ENCODE measurements at regions of chr1 and their contacts with region 1.

Region 1: DNA sequence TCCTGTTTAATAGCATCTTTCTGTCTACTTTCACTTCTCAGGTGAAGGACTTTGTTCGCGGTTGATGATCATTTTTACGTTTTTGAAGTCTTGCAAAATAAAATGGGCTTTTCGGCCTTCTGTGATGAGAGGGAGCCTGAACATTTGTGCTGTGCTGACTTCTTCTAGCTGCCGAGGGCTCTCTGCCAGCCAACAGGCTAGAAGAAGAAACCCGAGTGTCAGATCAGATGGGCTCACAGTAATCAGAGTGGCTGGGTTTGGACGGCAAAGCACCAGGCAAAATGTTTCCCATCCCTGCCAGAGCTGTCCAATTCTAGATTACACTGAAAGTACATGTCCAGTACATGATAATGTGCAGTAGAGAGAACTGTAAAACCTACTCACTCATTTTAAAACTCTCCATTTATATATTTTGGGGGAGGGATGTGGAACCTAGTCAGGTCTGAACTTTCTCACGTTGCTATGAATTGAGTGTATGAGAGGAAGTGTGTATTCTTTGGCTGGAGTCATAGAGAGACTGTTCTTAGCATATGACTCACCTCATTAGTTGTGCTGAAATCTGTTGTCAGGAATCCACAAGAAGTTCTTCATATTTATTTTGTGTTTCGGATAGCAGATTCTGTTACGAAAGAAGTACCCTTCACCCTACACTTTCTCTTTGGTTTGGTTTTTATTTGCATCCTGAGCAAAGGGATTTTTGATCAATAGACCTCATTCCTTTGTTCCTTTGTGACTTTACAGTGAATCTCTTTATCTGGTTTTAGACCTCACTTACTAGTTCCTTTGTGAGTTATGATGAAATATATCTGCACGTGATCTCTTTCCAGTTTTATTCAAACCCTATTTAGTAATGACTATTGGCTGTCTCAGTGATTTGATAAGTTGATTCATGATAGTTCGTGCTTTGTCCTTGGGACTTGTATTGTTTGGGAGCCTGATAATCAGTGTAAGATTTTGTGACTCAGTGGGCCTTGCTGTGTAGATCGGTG is 4.8 kb downstream of the ATP1A1 start:
- DNase-seq: peak; percentile 93
- H3K4me3 Mint-ChIP-seq: peak overlapping the region; percentile 94
- H3K27ac Mint-ChIP-seq: peak overlapping the region; percentile 78
- H3K4me1 Mint-ChIP-seq: peaks cover 55% of the 10 kb centered on the region
- H3K27me3 Mint-ChIP-seq: no peaks in the 10 kb centered on the region
- CTCF ChIP-seq: no peak

Region 2: GRCh38 chr1:116092752-116093482 is 284.9 kb before region 1 on chr1:
- CTCF ChIA-PET with region 1: no interaction called
- POLR2A ChIA-PET with region 1: no interaction called
- intact Hi-C with region 1: no loop called
- DNase-seq: no peak
- H3K4me3 Mint-ChIP-seq: no peak overlapping the region
- H3K27ac Mint-ChIP-seq: peak overlapping the region; percentile 31
- H3K4me1 Mint-ChIP-seq: peaks cover 5% of the 10 kb centered on the region
- H3K27me3 Mint-ChIP-seq: no peaks in the 10 kb centered on the region
- CTCF ChIP-seq: no peak

Region 3: DNA sequence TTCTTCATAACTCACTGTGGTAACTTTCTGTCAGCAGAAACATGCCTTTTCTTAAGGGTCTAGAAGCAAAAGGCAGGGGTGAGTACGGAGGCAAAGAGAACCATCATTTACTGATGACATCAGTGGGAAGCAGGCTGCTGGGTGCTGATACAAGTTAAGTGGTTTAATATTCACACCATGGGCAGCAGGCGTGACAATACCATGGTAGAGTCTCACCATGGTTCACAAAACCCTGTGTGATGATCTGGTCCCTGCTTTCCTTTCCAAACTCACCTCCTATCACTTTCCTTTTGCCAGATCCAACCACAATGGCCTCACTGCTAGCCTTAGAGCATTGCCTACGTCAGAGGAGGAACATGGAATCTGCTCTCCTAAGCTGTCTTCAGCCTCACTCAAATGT is 258.0 kb before region 1 on chr1:
- CTCF ChIA-PET with region 1: no interaction called
- POLR2A ChIA-PET with region 1: no interaction called
- intact Hi-C with region 1: no loop called
- DNase-seq: no peak
- H3K4me3 Mint-ChIP-seq: no peak overlapping the region
- H3K27ac Mint-ChIP-seq: no peak overlapping the region
- H3K4me1 Mint-ChIP-seq: peaks cover 14% of the 10 kb centered on the region
- H3K27me3 Mint-ChIP-seq: no peaks in the 10 kb centered on the region
- CTCF ChIP-seq: no peak

Region 4: GRCh38 chr1:116151739-116152576 is 225.9 kb before region 1 on chr1:
- CTCF ChIA-PET with region 1: interaction called, 14 read pairs
- POLR2A ChIA-PET with region 1: interaction called, 24 read pairs
- intact Hi-C with region 1: loop called (anchors 10 kb)
- DNase-seq: peak; percentile 72
- H3K4me3 Mint-ChIP-seq: peak overlapping the region; percentile 20
- H3K27ac Mint-ChIP-seq: no peak overlapping the region
- H3K4me1 Mint-ChIP-seq: peaks cover 4% of the 10 kb centered on the region
- H3K27me3 Mint-ChIP-seq: peaks cover 12% of the 10 kb centered on the region
- CTCF ChIP-seq: peak; percentile 90

Region 5: GRCh38 chr1:116288201-116288761 is 89.6 kb before region 1 on chr1:
- CTCF ChIA-PET with region 1: interaction called, 7 read pairs
- POLR2A ChIA-PET with region 1: interaction called, 62 read pairs
- intact Hi-C with region 1: loop called (anchors 1 kb)
- DNase-seq: no peak
- H3K4me3 Mint-ChIP-seq: no peak overlapping the region
- H3K27ac Mint-ChIP-seq: peak overlapping the region; percentile 55
- H3K4me1 Mint-ChIP-seq: peaks cover 59% of the 10 kb centered on the region
- H3K27me3 Mint-ChIP-seq: no peaks in the 10 kb centered on the region
- CTCF ChIP-seq: no peak

Region 6: DNA sequence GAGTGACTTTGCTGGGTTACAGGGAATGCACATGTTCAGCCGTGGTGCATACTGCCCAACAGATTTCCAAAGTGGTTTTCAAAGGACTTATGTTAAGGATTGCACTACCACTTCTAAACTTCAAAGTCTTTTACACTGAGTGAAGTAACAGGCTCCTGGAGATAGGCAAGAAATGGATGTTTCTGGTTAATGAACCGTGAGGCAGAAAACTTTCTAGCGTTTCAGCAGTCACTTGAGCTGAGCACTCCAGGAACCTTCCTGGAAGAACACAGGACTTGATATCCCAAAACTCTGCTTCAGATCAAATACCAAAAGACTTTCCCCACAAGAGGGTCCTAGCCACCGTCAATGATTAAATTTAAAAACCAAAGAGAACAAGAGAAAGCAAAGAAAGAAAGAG is 79.1 kb before region 1 on chr1:
- CTCF ChIA-PET with region 1: no interaction called
- POLR2A ChIA-PET with region 1: no interaction called
- intact Hi-C with region 1: no loop called
- DNase-seq: no peak
- H3K4me3 Mint-ChIP-seq: no peak overlapping the region
- H3K27ac Mint-ChIP-seq: no peak overlapping the region
- H3K4me1 Mint-ChIP-seq: peaks cover 12% of the 10 kb centered on the region
- H3K27me3 Mint-ChIP-seq: no peaks in the 10 kb centered on the region
- CTCF ChIP-seq: no peak

Region 7: GRCh38 chr1:116334015-116334547 is 43.8 kb before region 1 on chr1:
- CTCF ChIA-PET with region 1: interaction called, 3 read pairs
- POLR2A ChIA-PET with region 1: interaction called, 28 read pairs
- intact Hi-C with region 1: no loop called
- DNase-seq: peak; percentile 94
- H3K4me3 Mint-ChIP-seq: no peak overlapping the region
- H3K27ac Mint-ChIP-seq: no peak overlapping the region
- H3K4me1 Mint-ChIP-seq: peaks cover 24% of the 10 kb centered on the region
- H3K27me3 Mint-ChIP-seq: no peaks in the 10 kb centered on the region
- CTCF ChIP-seq: no peak

Region 8: DNA sequence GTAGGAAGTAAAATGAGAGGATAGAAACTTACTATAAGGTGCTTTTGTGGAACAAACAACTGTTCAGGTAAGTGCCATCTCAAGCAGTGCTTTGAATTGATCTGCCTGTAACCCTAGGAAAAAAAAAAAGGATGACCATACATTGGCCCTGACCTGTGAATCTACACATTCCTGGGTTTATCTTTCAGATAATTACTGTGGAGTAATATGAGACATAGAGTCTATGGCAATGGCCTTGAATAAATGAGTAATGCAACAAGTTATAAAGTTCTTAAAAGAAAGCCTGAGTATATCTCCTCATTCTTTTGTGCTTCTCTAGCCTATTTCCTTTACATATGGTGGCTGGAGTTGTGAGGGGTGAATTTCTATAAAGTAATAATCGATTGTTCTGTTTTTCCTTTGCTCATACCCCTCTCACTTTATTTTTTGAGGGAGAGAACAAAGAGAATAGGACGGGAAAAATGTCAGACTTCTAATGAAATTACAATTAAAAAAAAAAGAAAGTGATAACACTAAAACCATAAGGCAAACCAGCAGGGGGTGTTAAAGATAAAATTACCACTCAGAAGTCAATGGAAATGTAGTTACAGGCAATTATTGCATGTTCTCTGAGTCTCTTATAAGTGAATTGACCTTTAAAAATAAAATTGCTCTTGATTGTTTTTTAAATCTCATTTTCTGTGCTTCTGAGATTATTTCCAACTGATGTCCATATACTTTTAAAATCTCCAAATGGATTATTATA is 17.2 kb before region 1 on chr1:
- CTCF ChIA-PET with region 1: no interaction called
- POLR2A ChIA-PET with region 1: interaction called, 31 read pairs
- intact Hi-C with region 1: no loop called
- DNase-seq: peak; percentile 48
- H3K4me3 Mint-ChIP-seq: no peak overlapping the region
- H3K27ac Mint-ChIP-seq: no peak overlapping the region
- H3K4me1 Mint-ChIP-seq: peaks cover 24% of the 10 kb centered on the region
- H3K27me3 Mint-ChIP-seq: no peaks in the 10 kb centered on the region
- CTCF ChIP-seq: peak; percentile 21

Region 9: DNA sequence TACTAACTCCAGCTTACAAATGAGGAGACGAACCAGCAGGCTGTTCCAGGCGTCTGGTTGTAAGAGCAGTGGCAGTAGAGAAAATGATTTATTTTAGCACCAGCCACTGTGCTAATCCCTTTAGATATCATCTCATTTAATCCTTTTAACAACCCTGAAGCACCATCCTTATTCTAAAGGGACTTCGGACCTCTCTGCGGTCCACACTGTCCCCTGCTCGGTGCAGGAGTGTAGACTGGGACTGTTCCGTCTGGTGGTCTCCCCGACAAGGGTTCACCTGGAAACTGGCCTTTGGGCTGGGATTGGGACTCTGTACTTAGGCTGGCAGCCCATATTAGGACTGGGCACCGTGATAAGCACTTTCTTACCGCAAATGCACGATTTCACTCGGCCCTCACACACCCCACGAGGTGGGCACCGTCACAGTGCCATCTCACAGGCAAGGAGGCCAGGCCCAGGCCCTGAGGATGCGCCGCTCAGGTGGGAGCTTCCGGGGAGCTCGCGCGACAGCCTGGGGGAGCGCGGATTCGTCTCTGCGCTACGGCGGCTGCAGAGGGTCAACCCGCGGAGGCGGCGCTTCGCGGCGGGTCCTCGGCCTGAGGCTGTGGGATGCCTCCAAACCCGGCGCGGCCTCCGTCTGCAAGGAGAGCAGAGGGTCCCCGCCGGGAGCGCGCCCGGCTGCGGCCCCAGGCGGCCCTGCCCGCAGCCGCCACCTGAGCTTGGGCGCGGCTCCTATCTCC is 40.4 kb after region 1 on chr1:
- CTCF ChIA-PET with region 1: interaction called, 4 read pairs
- POLR2A ChIA-PET with region 1: interaction called, 18 read pairs
- intact Hi-C with region 1: no loop called
- DNase-seq: peak; percentile 70
- H3K4me3 Mint-ChIP-seq: peak overlapping the region; percentile 85
- H3K27ac Mint-ChIP-seq: peak overlapping the region; percentile 50
- H3K4me1 Mint-ChIP-seq: peaks cover 6% of the 10 kb centered on the region
- H3K27me3 Mint-ChIP-seq: no peaks in the 10 kb centered on the region
- CTCF ChIP-seq: no peak

Region 10: DNA sequence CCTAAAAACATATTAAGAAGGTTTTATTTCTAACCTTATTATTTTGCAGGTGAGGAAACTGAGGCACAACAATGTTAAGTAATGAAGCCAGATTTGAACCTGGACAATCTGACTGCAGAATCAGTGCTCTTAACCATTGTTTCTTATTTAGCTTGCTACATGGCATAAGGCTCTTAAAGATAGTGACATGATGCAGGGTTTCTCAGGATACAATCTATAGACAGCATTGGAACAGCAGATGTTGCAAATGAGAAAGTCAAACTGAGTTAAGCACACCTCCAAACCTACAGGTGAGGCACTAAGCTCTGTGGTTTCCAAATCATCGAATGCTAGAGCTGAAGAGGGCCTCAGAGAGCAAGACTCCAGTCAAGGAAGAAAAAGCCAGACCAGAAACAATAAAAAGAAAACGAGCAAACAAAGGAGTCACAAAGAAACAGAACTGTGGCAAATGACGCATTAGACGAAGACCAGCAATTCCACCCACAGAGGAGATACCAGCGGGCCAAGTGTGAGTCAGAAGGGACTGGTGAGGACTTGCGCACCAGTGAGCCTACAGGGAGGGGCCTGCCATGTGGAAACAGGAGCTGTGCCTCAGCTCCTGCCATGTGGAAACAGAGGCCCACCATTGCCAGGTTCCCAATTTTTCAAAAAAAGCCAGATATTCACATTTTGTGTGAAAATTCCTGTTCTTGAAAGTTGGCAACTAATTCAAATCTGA is 178.6 kb after region 1 on chr1:
- CTCF ChIA-PET with region 1: no interaction called
- POLR2A ChIA-PET with region 1: interaction called, 12 read pairs
- intact Hi-C with region 1: no loop called
- DNase-seq: peak; percentile 99
- H3K4me3 Mint-ChIP-seq: peak overlapping the region; percentile 11
- H3K27ac Mint-ChIP-seq: peak overlapping the region; percentile 84
- H3K4me1 Mint-ChIP-seq: peaks cover 25% of the 10 kb centered on the region
- H3K27me3 Mint-ChIP-seq: no peaks in the 10 kb centered on the region
- CTCF ChIP-seq: no peak

Region 11: GRCh38 chr1:116667575-116668105 is 289.8 kb after region 1 on chr1 and contains the start of gene IGSF3:
- CTCF ChIA-PET with region 1: no interaction called
- POLR2A ChIA-PET with region 1: no interaction called
- intact Hi-C with region 1: no loop called
- DNase-seq: peak; percentile 76
- H3K4me3 Mint-ChIP-seq: peak within 1 kb of the TSS; percentile 68
- H3K27ac Mint-ChIP-seq: no peak within 1 kb of the TSS
- H3K4me1 Mint-ChIP-seq: no peaks in the 10 kb centered on the region
- H3K27me3 Mint-ChIP-seq: no peaks in the 10 kb centered on the region
- CTCF ChIP-seq: no peak
- total RNA-seq, gene IGSF3: 3.5 and 4.6 TPM in 2 replicates